Activated CD4-positive, alpha-beta T cell treated with anti-CD3 and anti-CD28 coated beads for 36 hours (primary cell): ENCODE measurements at regions of chr17 and their contacts with region 1.

Region 1: DNA sequence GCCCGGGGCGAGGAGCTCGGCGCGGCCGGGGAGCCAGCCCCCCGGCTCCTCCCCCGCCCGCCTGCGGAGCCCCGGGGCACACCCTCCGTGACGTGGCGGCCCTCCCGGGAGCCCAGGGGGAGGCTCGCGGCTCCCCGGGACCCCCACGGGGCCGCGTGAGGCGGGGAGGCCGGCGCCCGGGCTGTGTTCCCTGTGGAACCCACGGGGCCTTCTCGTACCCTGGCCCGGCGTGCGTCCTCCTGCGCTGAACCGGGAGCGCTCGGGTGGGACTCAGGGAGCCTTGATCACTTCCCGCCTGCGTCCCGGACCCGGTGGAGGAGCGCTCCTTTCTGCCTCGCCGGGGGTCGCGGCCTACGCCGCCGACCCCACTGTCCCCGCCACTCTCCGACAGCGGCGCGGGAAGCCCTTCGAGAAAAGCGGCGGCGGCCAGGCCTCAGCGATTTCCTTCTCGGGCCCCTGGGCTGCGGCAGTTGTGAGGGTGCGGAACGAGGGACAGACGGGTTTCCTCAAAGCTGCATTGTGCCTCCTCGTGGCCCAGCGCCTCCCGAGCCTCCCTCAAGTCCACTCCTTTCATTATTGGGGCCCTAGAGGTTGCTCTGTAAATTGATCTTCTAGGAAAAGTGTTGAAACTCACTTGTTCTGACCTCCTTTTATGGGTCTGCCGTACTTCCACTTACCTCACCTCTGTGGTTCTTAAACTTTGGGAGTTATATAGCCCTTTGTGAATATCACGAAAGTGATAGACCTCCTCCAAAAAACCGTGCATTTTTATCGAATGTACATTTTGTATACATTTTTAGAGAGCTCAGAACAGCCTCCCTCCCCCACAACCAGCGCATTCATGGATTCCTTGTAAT is 597 bp downstream of the LIG3 start:
- DNase-seq: peak; percentile 82
- ATAC-seq: peak; percentile 82
- H3K4me3 Mint-ChIP-seq: peak overlapping the region; percentile 86
- H3K27ac Mint-ChIP-seq: peak overlapping the region; percentile 93
- H3K4me1 Mint-ChIP-seq: peaks cover 50% of the 10 kb centered on the region
- H3K27me3 Mint-ChIP-seq: no peaks in the 10 kb centered on the region

Region 2: DNA sequence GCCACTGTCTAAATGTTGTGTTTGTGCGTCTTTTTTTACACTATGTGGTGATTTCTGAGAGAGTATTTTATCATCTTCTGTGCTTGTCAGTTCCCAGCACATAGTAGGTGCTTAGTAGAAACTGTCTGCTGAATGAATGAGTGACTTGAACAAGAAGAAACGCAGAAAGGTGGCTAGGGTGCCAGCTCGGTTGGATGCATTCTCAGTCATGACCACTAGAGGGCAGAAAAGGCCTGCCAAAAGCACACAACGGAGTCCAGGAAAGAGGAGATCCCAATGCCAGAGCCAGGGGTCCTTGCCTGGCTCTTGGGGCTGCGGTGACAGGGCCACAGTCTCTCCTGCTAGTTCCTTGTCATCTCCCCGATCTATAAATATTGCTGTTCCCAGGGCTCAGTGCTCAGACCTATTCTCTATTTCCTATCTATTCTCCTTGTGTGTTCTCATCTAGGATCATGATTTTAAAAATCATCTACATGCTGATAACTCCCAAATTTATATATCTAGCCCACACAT is 560.6 kb before region 1 on chr17:
- CTCF ChIA-PET with region 1: no interaction called
- POLR2A ChIA-PET with region 1: no interaction called
- intact Hi-C with region 1: loop called in 1 of 2 experiments (anchors 10 kb)
- DNase-seq: peak; percentile 78
- ATAC-seq: peak; percentile 55
- H3K4me3 Mint-ChIP-seq: no peak overlapping the region
- H3K27ac Mint-ChIP-seq: no peak overlapping the region
- H3K4me1 Mint-ChIP-seq: no peaks in the 10 kb centered on the region
- H3K27me3 Mint-ChIP-seq: peaks cover 27% of the 10 kb centered on the region

Region 3: GRCh38 chr17:34542700-34543336 is 438.1 kb before region 1 on chr17:
- CTCF ChIA-PET with region 1: interaction called, 4 read pairs
- POLR2A ChIA-PET with region 1: no interaction called
- intact Hi-C with region 1: loop called in 1 of 2 experiments (anchors 2 kb)
- DNase-seq: peak; percentile 68
- ATAC-seq: peak; percentile 47
- H3K4me3 Mint-ChIP-seq: no peak overlapping the region
- H3K27ac Mint-ChIP-seq: no peak overlapping the region
- H3K4me1 Mint-ChIP-seq: no peaks in the 10 kb centered on the region
- H3K27me3 Mint-ChIP-seq: peaks cover 22% of the 10 kb centered on the region

Region 4: GRCh38 chr17:34816848-34817247 is 164.1 kb before region 1 on chr17:
- CTCF ChIA-PET with region 1: no interaction called
- POLR2A ChIA-PET with region 1: no interaction called
- intact Hi-C with region 1: no loop called
- DNase-seq: no peak
- ATAC-seq: no peak
- H3K4me3 Mint-ChIP-seq: no peak overlapping the region
- H3K27ac Mint-ChIP-seq: no peak overlapping the region
- H3K4me1 Mint-ChIP-seq: peaks cover 11% of the 10 kb centered on the region
- H3K27me3 Mint-ChIP-seq: peaks cover 4% of the 10 kb centered on the region

Region 5: GRCh38 chr17:34961093-34961911 is 19.6 kb before region 1 on chr17 and contains the starts of genes CCT6B and ZNF830:
- CTCF ChIA-PET with region 1: interaction called, 3 read pairs
- POLR2A ChIA-PET with region 1: interaction called, 7 read pairs
- intact Hi-C with region 1: loop called (anchors 1 kb)
- DNase-seq: peak; percentile 95
- ATAC-seq: peak; percentile 91
- H3K4me3 Mint-ChIP-seq: peak within 1 kb of the TSS; percentile 99
- H3K27ac Mint-ChIP-seq: peak within 1 kb of the TSS; percentile 100
- H3K4me1 Mint-ChIP-seq: peaks cover 26% of the 10 kb centered on the region
- H3K27me3 Mint-ChIP-seq: no peaks in the 10 kb centered on the region
- total RNA-seq, gene CCT6B: 0.95 to 1.6 TPM
- total RNA-seq, gene ZNF830: 20.0 TPM

Region 6: DNA sequence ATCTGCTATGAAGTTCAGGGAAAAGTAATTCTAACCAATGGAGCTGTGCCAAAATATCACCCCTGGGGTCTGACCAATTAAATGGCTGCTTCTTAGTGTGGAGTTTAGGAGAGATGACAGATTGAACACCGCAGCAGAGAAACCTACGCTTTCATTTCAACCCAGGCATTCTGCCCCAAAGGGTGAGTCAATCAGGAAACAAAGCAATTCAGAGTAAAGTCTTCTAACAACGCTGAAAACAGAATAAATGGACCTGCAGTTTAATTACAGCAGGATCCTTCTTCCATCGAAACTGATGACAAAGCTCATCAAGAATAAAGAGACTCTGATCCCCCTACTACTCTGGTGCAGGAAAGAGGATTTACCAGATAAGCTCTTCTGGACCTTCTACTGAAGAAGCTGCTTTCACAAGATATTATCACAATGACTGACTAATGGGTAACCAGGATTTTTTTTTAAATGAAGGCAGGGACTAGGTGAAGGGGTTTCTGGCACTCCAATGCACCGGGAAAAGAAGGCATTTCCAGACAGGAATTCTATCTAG is 65.9 kb after region 1 on chr17:
- CTCF ChIA-PET with region 1: interaction called, 3 read pairs
- POLR2A ChIA-PET with region 1: interaction called, 3 read pairs
- intact Hi-C with region 1: loop called (anchors 2 kb)
- DNase-seq: peak; percentile 78
- ATAC-seq: peak; percentile 95
- H3K4me3 Mint-ChIP-seq: peak overlapping the region; percentile 71
- H3K27ac Mint-ChIP-seq: peak overlapping the region; percentile 91
- H3K4me1 Mint-ChIP-seq: peaks cover 80% of the 10 kb centered on the region
- H3K27me3 Mint-ChIP-seq: no peaks in the 10 kb centered on the region

Region 7: DNA sequence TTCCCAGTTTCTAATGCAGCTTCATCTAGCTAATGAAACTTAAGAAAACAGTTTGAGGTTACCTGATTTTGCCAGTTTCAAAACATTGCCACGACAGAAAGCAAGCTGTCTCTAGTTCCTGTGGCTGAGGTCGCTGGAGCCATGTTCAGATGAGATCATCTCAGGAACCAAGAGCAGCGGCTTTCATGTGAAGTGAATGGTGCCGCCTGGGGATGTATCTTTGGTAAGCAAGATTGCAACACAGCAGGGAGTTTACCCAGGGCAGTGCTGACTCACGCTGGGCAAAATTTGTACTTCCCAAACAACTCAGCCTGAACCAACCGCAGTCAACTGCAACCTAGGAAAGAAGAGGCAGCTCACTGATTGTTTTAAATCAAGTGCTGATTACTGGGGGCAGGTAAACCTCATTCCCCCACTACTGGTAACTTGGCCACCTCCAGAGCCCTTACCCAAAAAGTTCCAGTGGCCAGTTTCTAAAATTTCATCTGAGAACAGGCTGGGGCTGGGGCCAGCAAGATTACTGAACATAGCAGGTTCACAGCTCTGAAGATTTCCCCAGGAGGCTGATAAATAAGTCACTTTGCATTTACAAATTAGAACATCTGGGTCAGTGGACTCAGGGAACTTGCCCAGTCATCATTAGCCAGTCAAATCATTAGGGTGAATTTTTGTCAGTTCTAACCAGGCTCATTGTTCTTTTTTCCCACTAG is 82.8 kb after region 1 on chr17 and contains the start of gene RFFL:
- CTCF ChIA-PET with region 1: interaction called, 3 read pairs
- POLR2A ChIA-PET with region 1: no interaction called
- intact Hi-C with region 1: loop called in 1 of 2 experiments (anchors 1 kb)
- DNase-seq: peak; percentile 94
- ATAC-seq: peak; percentile 98
- H3K4me3 Mint-ChIP-seq: peak within 1 kb of the TSS; percentile 12
- H3K27ac Mint-ChIP-seq: peak within 1 kb of the TSS; percentile 80
- H3K4me1 Mint-ChIP-seq: peaks cover 62% of the 10 kb centered on the region
- H3K27me3 Mint-ChIP-seq: no peaks in the 10 kb centered on the region
- total RNA-seq, gene RFFL: 19.2 to 22.9 TPM

Region 8: DNA sequence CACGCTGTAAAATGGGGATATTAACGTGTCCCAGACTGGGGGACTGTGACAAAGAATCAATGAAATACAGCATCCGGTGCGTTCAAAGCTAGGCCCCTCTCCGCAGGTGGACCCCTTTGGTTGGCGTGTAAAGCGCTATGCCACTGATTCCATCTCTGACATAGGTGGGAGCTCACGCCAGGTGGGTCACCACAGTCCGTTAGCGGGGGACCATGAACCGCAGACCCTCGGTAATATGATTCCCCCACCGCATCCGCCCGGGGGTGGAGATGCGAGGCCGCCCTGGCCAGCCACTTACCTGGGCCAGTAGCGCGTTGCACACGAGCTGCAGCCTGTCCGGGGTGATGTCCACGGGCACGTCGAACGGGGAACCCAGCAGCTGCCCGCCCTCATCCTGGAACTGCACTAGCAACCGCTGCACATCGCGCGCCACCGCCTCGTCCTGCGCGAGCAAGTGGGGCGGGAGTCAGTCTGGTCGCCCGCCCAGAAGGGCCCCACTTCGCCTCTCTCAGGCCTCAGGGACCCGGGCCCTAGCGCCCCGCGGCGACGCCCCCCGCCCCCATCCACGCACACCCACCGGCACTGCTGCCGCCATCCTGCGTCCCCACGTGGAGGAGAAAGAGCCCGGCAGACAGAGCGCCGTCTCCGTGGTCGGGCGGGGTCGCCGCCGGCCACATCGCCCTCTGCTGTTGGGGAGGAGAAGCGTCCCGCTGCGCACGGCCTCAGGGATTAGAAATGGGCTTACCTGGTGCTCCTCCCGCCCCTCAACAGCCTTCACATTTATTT is 161.0 kb after region 1 on chr17 and contains the start of gene NLE1:
- CTCF ChIA-PET with region 1: no interaction called
- POLR2A ChIA-PET with region 1: no interaction called
- intact Hi-C with region 1: loop called in 1 of 2 experiments (anchors 1 kb)
- DNase-seq: peak; percentile 94
- ATAC-seq: peak; percentile 93
- H3K4me3 Mint-ChIP-seq: peak within 1 kb of the TSS; percentile 80
- H3K27ac Mint-ChIP-seq: peak within 1 kb of the TSS; percentile 81
- H3K4me1 Mint-ChIP-seq: peaks cover 14% of the 10 kb centered on the region
- H3K27me3 Mint-ChIP-seq: no peaks in the 10 kb centered on the region
- total RNA-seq, gene NLE1: 38.1 to 40.6 TPM